ENCODE measurements at regions of chr20 and their contacts with region 1.

Region 1: DNA sequence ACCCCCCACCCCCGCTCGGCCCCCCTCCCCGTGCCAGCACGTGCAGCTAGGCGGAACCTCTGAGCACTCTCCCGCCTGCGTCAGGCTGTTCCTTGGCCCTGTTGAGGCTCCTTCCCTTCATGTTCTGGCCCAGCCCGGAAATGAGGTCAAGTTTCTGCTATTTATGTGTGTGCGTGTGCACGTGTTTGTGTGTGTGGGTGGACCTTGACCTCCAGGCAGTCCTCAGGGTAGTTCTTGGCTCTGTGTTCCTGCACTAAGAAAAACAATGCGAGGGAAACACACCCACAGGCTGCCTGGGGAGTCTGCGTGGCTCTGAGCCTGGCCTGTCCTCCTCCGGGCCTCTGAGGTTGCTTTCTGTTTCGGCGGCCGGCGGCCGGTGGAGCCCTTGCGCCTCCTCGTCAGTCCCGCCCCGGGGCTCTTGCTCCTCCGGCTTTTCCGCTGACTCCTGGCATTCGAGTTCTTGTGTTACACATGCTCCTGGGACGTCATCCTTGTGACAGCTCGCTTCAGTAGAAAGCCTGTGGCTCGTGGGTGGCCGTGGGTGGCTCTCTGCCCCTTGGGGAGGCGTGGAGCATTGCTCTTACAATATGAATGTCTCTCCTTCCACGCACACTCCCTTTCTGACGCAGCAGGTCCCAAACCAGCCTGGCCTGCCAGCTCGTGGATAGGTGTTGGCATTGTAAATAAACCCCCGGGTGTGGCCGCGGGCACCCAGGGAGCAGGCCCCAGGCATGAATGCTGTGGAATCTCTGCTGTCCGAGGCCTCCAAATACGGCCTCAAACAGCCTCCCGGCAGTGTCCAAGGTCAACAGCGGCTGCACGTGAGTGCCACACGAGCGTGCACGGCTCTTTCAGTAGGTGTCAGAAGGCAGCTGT is 10.0 kb downstream of the SLCO4A1 start:
- DNase-seq: peak; percentile 90
- ATAC-seq: peak; percentile 70
- H3K4me3 ChIP-seq: peak overlapping the region; percentile 2 to 44 (median 17); a peak in 5 of 6 replicates
- H3K27ac ChIP-seq: peak overlapping the region; percentile 78
- H3K4me1 ChIP-seq: peaks cover 33% of the 10 kb centered on the region
- H3K27me3 ChIP-seq: no peaks in the 10 kb centered on the region
- CTCF ChIP-seq: no peak; the same call in 1 of the 2 replicates
- EP300 ChIP-seq: peak; percentile 14 to 84; a peak in 2 of 4 replicates
- POLR2A ChIP-seq: peak in 1 of 2 experiments; percentile 56; a peak in 2 of 4 replicates
- RAD21 ChIP-seq: no peak

Region 2: GRCh38 chr20:62382306-62383198 is 269.7 kb before region 1 on chr20:
- CTCF ChIA-PET with region 1: no interaction called
- POLR2A ChIA-PET with region 1: no interaction called
- in situ Hi-C with region 1: no loop called
- intact Hi-C with region 1: no loop called
- DNase-seq: peak; percentile 87
- ATAC-seq: peak; percentile 88
- H3K4me3 ChIP-seq: no peak overlapping the region; a peak in 1 of 6 replicates
- H3K27ac ChIP-seq: no peak overlapping the region
- H3K4me1 ChIP-seq: peaks cover 26% of the 10 kb centered on the region
- H3K27me3 ChIP-seq: no peaks in the 10 kb centered on the region; a peak in 2 of 5 replicates
- CTCF ChIP-seq: peak; percentile 100
- EP300 ChIP-seq: peak in 1 of 2 experiments; percentile 58; a peak in 1 of 4 replicates
- POLR2A ChIP-seq: peak in 1 of 2 experiments; percentile 49; a peak in 2 of 4 replicates
- RAD21 ChIP-seq: peak; percentile 99

Region 3: GRCh38 chr20:62642040-62642665 is 10.1 kb before region 1 on chr20 and contains the start of gene SLCO4A1:
- CTCF ChIA-PET with region 1: no interaction called
- POLR2A ChIA-PET with region 1: interaction called, 26 read pairs
- in situ Hi-C with region 1: no loop called
- intact Hi-C with region 1: no loop called
- DNase-seq: peak; percentile 59
- ATAC-seq: peak; percentile 71
- H3K4me3 ChIP-seq: peak within 1 kb of the TSS; percentile 67 to 86 (median 72)
- H3K27ac ChIP-seq: peak within 1 kb of the TSS; percentile 9
- H3K4me1 ChIP-seq: peaks cover 87% of the 10 kb centered on the region
- H3K27me3 ChIP-seq: peaks cover 11 to 13% of the 10 kb centered on the region in 2 experiments
- CTCF ChIP-seq: peak; percentile 53; the same call in 1 of the 2 replicates
- EP300 ChIP-seq: peak in 1 of 2 experiments; percentile 35; a peak in 1 of 4 replicates
- POLR2A ChIP-seq: peak; percentile 32 to 94; a peak in 2 of 4 replicates
- RAD21 ChIP-seq: no peak; the same call in none of the 2 replicates
- total RNA-seq, gene SLCO4A1: 23.8 and 55.5 TPM in 2 replicates

Measured in HepG2 (cell line).